ENCODE measurements at regions of chr2 and their contacts with region 1.

Region 1: DNA sequence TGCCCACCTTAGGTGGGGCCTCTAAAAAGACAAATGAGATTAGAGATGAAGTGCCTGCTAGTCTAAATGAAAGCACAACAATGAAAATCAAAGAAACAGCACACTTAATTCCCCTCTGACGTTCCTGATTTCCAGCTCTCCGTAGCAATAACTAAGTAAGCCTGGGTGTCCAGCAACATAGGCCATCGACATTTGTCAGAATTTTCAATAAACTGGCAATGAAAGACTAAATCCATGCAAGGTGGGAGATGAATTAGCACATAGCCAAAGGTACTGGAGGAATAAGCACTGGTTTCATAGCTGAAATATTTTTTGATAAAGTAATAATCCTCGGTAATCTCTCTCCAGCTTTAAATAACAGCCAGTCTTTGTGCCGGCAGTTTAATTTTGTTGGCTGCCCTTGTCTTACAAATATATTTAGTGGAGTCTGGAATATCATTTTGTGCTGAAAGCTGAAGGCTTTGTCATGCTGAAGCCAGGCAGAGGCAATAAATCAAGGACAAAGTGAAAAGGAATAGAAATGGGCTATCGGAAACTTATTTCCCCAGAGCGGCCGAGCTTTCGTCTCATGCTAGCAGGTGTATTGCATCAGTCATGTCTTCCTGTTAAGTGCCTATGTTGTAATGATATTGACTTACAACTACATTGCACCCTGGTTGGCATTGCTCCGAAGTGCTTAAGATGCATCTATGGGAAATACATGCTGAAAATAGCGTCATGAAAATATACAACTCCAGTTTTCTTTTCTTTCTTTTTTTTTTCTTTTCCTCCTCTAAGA is 790.1 kb downstream of the CNTNAP5 start:
- DNase-seq: no peak
- CTCF ChIP-seq: no peak

Region 2: DNA sequence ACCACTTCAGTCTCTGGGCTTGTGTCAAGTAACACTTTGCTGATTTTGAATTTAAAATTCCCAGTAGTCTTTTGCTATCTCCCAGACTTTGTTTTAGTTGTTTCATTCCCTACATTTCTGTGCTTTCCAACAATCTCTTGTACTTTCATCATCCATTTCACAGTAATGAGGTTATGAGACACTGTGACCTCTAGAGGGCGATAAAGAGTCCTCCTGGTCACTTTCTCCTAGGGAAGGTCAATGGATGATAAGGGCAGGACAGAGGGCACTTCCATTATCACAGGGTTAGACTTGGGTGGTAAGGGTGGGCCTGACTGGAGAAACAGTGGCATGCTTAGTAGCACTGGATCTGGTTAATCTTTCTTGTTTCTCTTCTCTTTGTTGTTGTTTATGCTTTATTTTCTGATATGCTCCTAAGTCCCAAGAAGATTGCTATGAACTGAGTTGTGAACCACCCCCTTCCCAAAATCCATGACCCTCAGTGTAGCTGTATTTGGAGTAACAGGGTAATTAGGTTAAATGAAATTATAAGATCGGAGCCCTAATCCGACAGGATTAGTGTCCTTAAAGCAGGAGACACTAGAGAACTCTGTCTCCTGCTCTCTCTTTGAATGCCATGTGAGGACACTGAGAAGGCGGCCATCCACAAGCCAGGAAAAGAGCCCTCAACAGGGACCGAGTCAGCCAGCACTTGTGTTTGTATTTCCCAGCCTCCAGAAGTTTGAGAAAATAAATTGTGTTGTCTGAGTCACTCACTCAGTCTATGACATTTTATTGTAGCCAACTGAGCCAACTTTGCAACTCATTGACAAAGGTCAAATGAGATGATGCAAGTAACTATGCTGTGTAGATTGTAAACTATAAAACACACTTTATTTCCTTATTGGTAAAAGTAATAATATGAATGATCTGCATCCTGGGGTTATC is 10.9 kb before region 1 on chr2:
- CTCF ChIA-PET with region 1: interaction called, 10 read pairs
- POLR2A ChIA-PET with region 1: no interaction called
- DNase-seq: peak; percentile 40
- CTCF ChIP-seq: peak; percentile 74

Measured in GM10248 (cell line).